A549 (cell line): ENCODE measurements at regions of chr22 and their contacts with region 1.

Region 1: GRCh38 chr22:39520054-39520891 is at the start of gene ATF4:
- DNase-seq: peak; percentile 94 to 99
- ATAC-seq: peak; percentile 82 to 91
- H3K4me3 ChIP-seq: peak within 1 kb of the TSS; percentile 98
- H3K27ac ChIP-seq: peak within 1 kb of the TSS; percentile 96 to 99
- H3K4me1 ChIP-seq: peaks cover 25% of the 10 kb centered on the region
- CTCF ChIP-seq: no peak
- EP300 ChIP-seq: no peak
- POLR2A ChIP-seq: peak; percentile 87
- RAD21 ChIP-seq: no peak
- polyA plus RNA-seq, gene ATF4: 557 and 593 TPM in 2 replicates

Region 2: GRCh38 chr22:39490135-39490798 is 30.0 kb before region 1 on chr22:
- CTCF ChIA-PET with region 1: interaction called, 80 read pairs
- POLR2A ChIA-PET with region 1: interaction called, 7 read pairs
- DNase-seq: peak; percentile 74 to 87
- ATAC-seq: peak; percentile 88 to 96
- H3K4me3 ChIP-seq: no peak overlapping the region
- H3K27ac ChIP-seq: no peak overlapping the region
- H3K4me1 ChIP-seq: no peaks in the 10 kb centered on the region
- CTCF ChIP-seq: no peak
- EP300 ChIP-seq: no peak
- POLR2A ChIP-seq: no peak
- RAD21 ChIP-seq: no peak

Region 3: DNA sequence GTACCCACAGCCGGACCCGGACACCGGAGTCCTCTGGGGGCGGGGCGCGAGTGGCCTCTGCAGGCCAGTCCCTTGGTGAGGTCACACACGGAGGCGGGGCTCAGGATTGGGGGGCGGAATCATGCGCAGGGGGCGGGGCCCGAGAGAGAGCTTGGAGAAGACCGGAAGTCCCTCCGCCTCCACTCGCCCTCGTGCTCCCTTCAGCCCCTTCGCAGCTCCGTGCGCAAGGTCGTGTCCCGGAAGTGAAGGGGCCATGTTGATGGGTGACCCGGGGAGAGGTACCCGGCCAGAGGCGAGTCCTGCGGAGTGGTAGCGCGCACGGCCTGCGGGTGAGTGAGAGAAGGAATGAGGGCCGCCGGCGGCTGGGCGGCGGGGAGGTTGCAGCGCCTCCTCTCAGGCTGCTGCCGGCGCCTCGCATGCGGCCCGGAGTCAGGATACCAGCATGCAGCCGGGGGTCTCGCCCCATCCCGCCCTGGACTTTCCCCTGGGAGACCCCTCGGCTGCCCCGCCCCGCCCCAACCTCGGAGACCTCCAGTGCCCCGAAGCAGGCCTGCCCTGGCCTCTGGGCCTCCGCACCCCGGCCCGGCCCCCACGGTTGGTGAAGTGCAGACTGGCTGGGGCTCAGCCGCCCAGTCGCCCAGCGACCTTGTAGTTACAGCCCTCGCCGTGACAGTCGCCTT is 18.0 kb before region 1 on chr22 and contains the start of gene MIEF1:
- CTCF ChIA-PET with region 1: interaction called, 14 read pairs
- POLR2A ChIA-PET with region 1: interaction called, 27 read pairs
- DNase-seq: peak; percentile 88 to 95
- ATAC-seq: peak; percentile 99
- H3K4me3 ChIP-seq: peak within 1 kb of the TSS; percentile 100
- H3K27ac ChIP-seq: peak within 1 kb of the TSS; percentile 98
- H3K4me1 ChIP-seq: peaks cover 12% of the 10 kb centered on the region; the same call in 2 of the 3 replicates
- CTCF ChIP-seq: no peak
- EP300 ChIP-seq: no peak
- POLR2A ChIP-seq: peak; percentile 65
- RAD21 ChIP-seq: no peak
- polyA plus RNA-seq, gene MIEF1: 19.8 and 20.5 TPM in 2 replicates

Region 4: DNA sequence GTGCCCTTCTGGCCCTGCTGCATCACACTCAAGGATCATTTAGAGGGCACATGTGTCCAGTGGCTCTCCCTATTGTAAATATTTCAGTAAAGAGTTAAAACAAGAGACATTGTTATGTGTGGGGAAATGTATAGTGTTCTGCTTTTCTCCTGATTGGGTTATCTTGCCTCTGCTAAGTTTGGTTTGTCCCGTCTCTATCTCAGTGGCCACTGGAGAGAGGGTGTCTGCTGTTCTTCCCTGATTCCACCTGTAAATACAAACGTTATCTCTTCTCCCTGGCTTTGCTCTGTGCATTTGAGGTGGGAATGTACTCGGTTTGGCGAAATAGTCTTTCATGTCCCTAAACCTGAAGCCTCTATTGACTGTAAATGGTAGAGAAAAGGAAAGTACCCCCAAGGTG is 11.9 kb before region 1 on chr22:
- CTCF ChIA-PET with region 1: interaction called, 14 read pairs
- POLR2A ChIA-PET with region 1: interaction called, 3 read pairs
- DNase-seq: no peak
- ATAC-seq: peak in 1 of 2 experiments; percentile 39; a peak in 1 of 6 replicates
- H3K4me3 ChIP-seq: no peak overlapping the region
- H3K27ac ChIP-seq: no peak overlapping the region
- H3K4me1 ChIP-seq: peaks cover 5% of the 10 kb centered on the region; the same call in 2 of the 3 replicates
- CTCF ChIP-seq: no peak
- EP300 ChIP-seq: no peak
- POLR2A ChIP-seq: no peak
- RAD21 ChIP-seq: no peak